AG04449 (cell line): ENCODE measurements at regions of chr1 and their contacts with region 1.

Region 1: GRCh38 chr1:160291248-160292220 is 6.6 kb upstream of the PEX19 start:
- DNase-seq: no peak
- H3K4me3 ChIP-seq: no peak overlapping the region
- CTCF ChIP-seq: peak; percentile 75

Region 2: GRCh38 chr1:160078512-160079195 is 212.9 kb before region 1 on chr1:
- CTCF ChIA-PET with region 1: interaction called, 10 read pairs
- POLR2A ChIA-PET with region 1: no interaction called
- DNase-seq: no peak
- H3K4me3 ChIP-seq: no peak overlapping the region
- CTCF ChIP-seq: peak; percentile 77

Region 3: GRCh38 chr1:160108888-160109662 is 182.5 kb before region 1 on chr1:
- CTCF ChIA-PET with region 1: interaction called, 14 read pairs
- POLR2A ChIA-PET with region 1: no interaction called
- DNase-seq: no peak
- H3K4me3 ChIP-seq: no peak overlapping the region
- CTCF ChIP-seq: peak; percentile 35

Region 4: GRCh38 chr1:160137216-160137862 is 154.2 kb before region 1 on chr1:
- CTCF ChIA-PET with region 1: no interaction called
- POLR2A ChIA-PET with region 1: no interaction called
- DNase-seq: no peak
- H3K4me3 ChIP-seq: no peak overlapping the region
- CTCF ChIP-seq: no peak

Region 5: DNA sequence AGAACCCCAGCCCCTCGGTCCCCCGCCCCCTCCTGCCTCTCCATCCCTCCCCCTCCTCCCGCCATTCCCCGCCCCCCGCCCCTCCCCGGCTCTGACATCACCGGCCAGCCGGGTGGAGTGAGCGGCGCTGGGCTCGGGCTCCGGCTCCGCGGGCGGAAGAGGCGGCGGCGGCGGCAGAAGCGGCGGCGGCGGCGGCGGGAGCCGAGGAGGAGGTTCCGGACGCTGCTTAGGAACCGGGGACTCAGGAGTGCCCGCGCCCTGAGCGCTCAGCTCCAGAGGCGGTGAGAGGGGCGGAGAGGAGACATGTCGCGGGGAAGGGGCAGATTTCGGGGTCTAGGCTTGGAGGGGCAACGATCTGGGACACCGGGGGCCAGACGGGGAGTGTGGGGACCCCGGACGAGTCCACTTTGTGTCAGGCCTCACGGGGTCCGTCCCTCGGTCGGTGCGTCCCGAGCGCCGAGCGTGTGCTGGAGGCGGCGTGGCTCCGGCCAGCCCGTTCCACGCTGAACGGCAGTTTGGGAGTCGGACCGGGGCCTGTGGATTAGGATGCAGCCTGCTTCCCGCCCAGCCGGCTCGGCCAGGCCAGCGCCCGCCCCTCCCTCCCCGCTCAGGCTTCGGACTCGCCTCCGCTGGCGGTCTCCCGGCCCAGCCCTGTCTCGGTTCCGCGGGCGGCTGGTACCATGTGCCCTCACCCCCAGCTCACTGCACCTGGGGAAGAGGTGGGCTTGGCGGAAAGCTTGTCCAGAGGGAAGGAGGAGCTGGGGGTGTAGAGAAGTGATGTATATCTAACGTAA is 86.1 kb before region 1 on chr1 and contains the start of gene PEA15:
- CTCF ChIA-PET with region 1: interaction called, 26 read pairs
- POLR2A ChIA-PET with region 1: no interaction called
- DNase-seq: no peak
- H3K4me3 ChIP-seq: peak within 1 kb of the TSS; percentile 96
- CTCF ChIP-seq: no peak

Region 6: GRCh38 chr1:160261893-160262794 is 29.4 kb before region 1 on chr1 and contains the start of gene DCAF8:
- CTCF ChIA-PET with region 1: interaction called, 21 read pairs
- POLR2A ChIA-PET with region 1: no interaction called
- DNase-seq: peak; percentile 76
- H3K4me3 ChIP-seq: peak within 1 kb of the TSS; percentile 99
- CTCF ChIP-seq: no peak

Region 7: DNA sequence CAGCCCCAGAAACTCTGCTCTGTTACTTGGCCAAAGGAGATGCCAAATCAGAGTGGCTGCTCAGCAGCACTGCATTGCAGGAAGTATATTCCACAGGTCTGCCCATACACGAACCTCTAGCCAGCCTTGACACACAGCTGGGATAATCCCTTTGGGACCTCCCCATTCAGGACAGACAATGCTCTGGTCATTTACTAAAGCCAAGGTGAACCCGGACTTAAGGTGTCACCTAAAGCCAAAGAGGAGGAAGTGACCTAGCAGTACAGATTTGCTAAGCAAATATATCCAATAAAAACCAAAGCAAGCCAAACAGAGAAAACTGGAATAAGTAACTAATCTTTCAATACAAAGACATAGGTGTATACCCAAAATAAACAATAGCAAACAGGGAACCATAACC is 23.8 kb after region 1 on chr1:
- CTCF ChIA-PET with region 1: interaction called, 170 read pairs
- POLR2A ChIA-PET with region 1: no interaction called
- DNase-seq: no peak
- H3K4me3 ChIP-seq: no peak overlapping the region
- CTCF ChIP-seq: no peak

Region 8: GRCh38 chr1:160376525-160377131 is 85.1 kb after region 1 on chr1:
- CTCF ChIA-PET with region 1: interaction called, 12 read pairs
- POLR2A ChIA-PET with region 1: no interaction called
- DNase-seq: no peak
- H3K4me3 ChIP-seq: no peak overlapping the region
- CTCF ChIP-seq: peak; percentile 84